ENCODE measurements at regions of chr2 and their contacts with region 1.

Region 1: GRCh38 chr2:84302513-84303412 is 156.3 kb downstream of the SUCLG1 start:
- DNase-seq: peak; percentile 66 to 69
- H3K4me3 ChIP-seq: no peak overlapping the region
- H3K4me3 Mint-ChIP-seq: no peak overlapping the region
- H3K27ac Mint-ChIP-seq: no peak overlapping the region
- H3K4me1 ChIP-seq: peaks cover 32% of the 10 kb centered on the region
- H3K4me1 Mint-ChIP-seq: peaks cover 42% of the 10 kb centered on the region
- H3K27me3 ChIP-seq: no peaks in the 10 kb centered on the region
- H3K27me3 Mint-ChIP-seq: no peaks in the 10 kb centered on the region
- CTCF ChIP-seq: peak; percentile 57 to 66

Region 2: DNA sequence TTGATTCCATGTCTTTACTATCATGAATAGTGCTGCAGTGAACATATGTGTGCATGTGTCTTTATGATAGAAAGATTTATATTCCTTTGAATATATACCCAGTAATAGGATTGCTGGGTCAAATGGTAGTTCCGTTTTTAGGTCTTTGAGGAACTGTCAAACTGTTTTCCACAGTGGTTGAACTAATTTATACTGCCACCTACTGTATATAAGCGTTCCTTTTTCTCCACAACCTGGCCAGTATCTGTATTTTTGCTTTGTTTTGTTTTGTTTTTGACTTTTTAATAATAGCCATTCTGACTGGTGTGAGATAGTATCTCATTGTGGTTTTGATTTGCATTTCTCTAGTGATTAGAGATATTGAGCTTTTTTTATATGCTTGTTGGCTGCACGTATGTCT is 485.3 kb before region 1 on chr2:
- CTCF ChIA-PET with region 1: no interaction called
- POLR2A ChIA-PET with region 1: no interaction called
- intact Hi-C with region 1: loop called (anchors 1 kb)
- DNase-seq: no peak
- H3K4me3 ChIP-seq: no peak overlapping the region
- H3K4me3 Mint-ChIP-seq: no peak overlapping the region
- H3K27ac Mint-ChIP-seq: no peak overlapping the region
- H3K4me1 ChIP-seq: peaks cover 7% of the 10 kb centered on the region
- H3K4me1 Mint-ChIP-seq: peaks cover 9% of the 10 kb centered on the region
- H3K27me3 ChIP-seq: no peaks in the 10 kb centered on the region
- H3K27me3 Mint-ChIP-seq: no peaks in the 10 kb centered on the region
- CTCF ChIP-seq: peak in 1 of 2 experiments; percentile 9

Region 3: DNA sequence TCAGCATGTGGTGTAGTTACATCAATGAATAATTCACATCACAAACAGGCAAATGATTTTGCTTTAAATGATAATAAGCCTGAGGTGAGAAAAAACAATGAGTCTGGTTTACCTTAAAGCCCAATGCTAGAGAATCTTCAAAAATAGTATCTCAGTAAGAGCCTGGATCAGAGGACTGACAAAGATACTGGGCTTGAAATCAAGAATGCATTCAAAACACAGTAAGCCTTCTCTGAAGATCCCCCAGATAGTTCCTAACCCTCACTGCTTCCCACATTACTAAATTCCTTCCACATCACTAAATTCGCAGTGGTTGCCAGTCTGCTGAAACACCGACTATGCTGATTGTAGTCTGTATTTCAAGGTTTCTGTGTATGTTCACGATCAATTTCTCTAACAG is 358.6 kb before region 1 on chr2:
- CTCF ChIA-PET with region 1: no interaction called
- POLR2A ChIA-PET with region 1: no interaction called
- intact Hi-C with region 1: no loop called
- DNase-seq: no peak
- H3K4me3 ChIP-seq: no peak overlapping the region
- H3K4me3 Mint-ChIP-seq: no peak overlapping the region
- H3K27ac Mint-ChIP-seq: no peak overlapping the region
- H3K4me1 ChIP-seq: no peaks in the 10 kb centered on the region
- H3K4me1 Mint-ChIP-seq: no peaks in the 10 kb centered on the region
- H3K27me3 ChIP-seq: no peaks in the 10 kb centered on the region
- H3K27me3 Mint-ChIP-seq: no peaks in the 10 kb centered on the region
- CTCF ChIP-seq: no peak

Region 4: DNA sequence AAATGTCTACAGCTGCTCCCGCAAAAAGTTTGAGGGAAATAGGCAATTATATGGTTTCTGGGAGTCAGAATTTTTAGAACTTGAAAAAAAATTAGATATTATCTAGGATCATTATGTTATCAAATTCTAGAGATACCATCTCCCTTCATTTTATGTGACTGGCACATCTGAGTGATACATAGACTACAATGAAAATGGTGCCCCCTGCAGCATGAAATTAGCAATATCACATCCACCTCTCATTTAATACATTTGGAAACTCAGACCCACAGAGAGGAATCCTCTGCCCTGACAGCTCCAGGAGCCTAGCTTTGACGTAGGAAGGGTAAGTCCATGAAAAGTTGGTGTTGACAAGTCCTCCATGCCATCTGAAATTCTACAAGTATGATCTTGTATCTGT is 225.3 kb before region 1 on chr2:
- CTCF ChIA-PET with region 1: no interaction called
- POLR2A ChIA-PET with region 1: no interaction called
- intact Hi-C with region 1: loop called (anchors 2 kb)
- DNase-seq: peak in 1 of 2 experiments; percentile 35
- H3K4me3 ChIP-seq: no peak overlapping the region
- H3K4me3 Mint-ChIP-seq: no peak overlapping the region
- H3K27ac Mint-ChIP-seq: no peak overlapping the region
- H3K4me1 ChIP-seq: no peaks in the 10 kb centered on the region
- H3K4me1 Mint-ChIP-seq: no peaks in the 10 kb centered on the region
- H3K27me3 ChIP-seq: no peaks in the 10 kb centered on the region
- H3K27me3 Mint-ChIP-seq: no peaks in the 10 kb centered on the region
- CTCF ChIP-seq: peak; percentile 17 to 39

Region 5: GRCh38 chr2:84152462-84152861 is 150.3 kb before region 1 on chr2:
- CTCF ChIA-PET with region 1: no interaction called
- POLR2A ChIA-PET with region 1: no interaction called
- intact Hi-C with region 1: no loop called
- DNase-seq: no peak
- H3K4me3 ChIP-seq: no peak overlapping the region
- H3K4me3 Mint-ChIP-seq: no peak overlapping the region
- H3K27ac Mint-ChIP-seq: no peak overlapping the region
- H3K4me1 ChIP-seq: no peaks in the 10 kb centered on the region
- H3K4me1 Mint-ChIP-seq: no peaks in the 10 kb centered on the region
- H3K27me3 ChIP-seq: no peaks in the 10 kb centered on the region
- H3K27me3 Mint-ChIP-seq: peaks cover 2% of the 10 kb centered on the region
- CTCF ChIP-seq: no peak

Region 6: DNA sequence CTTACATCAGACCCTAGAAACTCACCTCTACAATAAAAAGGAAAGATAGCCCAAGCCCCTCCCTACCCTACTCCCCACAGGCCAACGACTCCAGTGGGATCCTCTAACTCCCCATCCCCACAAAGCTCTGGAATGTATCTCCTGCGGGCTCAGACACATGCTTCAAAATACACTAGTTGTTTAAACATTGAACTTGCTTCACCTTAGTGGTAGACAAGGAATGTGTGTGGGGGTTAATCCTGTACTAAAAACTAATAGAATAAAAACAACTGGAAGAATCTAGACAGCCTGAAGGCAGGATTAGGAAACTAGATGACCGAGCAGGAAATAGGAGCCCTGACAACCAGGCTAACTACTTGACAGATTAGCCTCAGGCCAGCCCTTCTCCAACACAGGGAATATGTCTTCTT is 55.2 kb before region 1 on chr2:
- CTCF ChIA-PET with region 1: no interaction called
- POLR2A ChIA-PET with region 1: no interaction called
- intact Hi-C with region 1: loop called (anchors 1 kb)
- DNase-seq: peak; percentile 40 to 51
- H3K4me3 ChIP-seq: no peak overlapping the region
- H3K4me3 Mint-ChIP-seq: no peak overlapping the region
- H3K27ac Mint-ChIP-seq: no peak overlapping the region
- H3K4me1 ChIP-seq: no peaks in the 10 kb centered on the region
- H3K4me1 Mint-ChIP-seq: peaks cover 7% of the 10 kb centered on the region
- H3K27me3 ChIP-seq: no peaks in the 10 kb centered on the region
- H3K27me3 Mint-ChIP-seq: no peaks in the 10 kb centered on the region
- CTCF ChIP-seq: no peak

Region 7: DNA sequence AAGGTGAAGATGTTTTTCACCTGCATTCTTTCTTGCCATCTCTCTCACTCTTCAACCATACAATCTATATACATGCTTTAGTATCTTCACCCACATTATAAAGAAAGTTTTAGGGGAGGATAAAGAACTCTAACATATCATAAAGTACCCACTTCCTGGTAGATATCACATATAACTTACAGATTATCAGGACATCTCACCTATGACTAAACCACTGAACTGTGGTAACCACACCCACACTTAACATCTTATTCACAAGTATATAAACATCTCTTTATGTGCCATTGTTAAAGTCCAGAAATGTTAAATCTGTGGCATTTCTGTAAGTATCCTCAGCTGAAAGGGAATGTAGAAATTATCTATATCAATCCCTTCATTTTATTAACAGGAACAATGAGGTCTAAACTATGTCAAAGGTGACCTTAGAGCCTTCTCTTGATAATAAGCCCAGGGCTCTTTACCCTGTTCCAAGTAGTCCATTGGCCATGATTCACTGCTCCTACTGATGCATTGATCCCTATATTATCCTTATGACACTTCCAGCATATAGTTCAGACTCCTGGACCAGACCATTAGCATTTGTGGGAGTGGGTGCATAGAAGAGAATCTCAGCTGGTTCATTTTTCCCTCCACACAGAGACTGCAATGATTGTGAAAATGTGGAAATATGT is 26.0 kb before region 1 on chr2:
- CTCF ChIA-PET with region 1: no interaction called
- POLR2A ChIA-PET with region 1: no interaction called
- intact Hi-C with region 1: no loop called
- DNase-seq: no peak
- H3K4me3 ChIP-seq: no peak overlapping the region
- H3K4me3 Mint-ChIP-seq: no peak overlapping the region
- H3K27ac Mint-ChIP-seq: no peak overlapping the region
- H3K4me1 ChIP-seq: no peaks in the 10 kb centered on the region
- H3K4me1 Mint-ChIP-seq: no peaks in the 10 kb centered on the region
- H3K27me3 ChIP-seq: no peaks in the 10 kb centered on the region
- H3K27me3 Mint-ChIP-seq: peaks cover 6% of the 10 kb centered on the region
- CTCF ChIP-seq: no peak

Region 8: GRCh38 chr2:84782717-84783442 is 480.1 kb after region 1 on chr2:
- CTCF ChIA-PET with region 1: no interaction called
- POLR2A ChIA-PET with region 1: no interaction called
- intact Hi-C with region 1: no loop called
- DNase-seq: no peak
- H3K4me3 ChIP-seq: no peak overlapping the region
- H3K4me3 Mint-ChIP-seq: no peak overlapping the region
- H3K27ac Mint-ChIP-seq: no peak overlapping the region
- H3K4me1 ChIP-seq: no peaks in the 10 kb centered on the region
- H3K4me1 Mint-ChIP-seq: no peaks in the 10 kb centered on the region
- H3K27me3 ChIP-seq: no peaks in the 10 kb centered on the region; the same call in none of the 2 replicates
- H3K27me3 Mint-ChIP-seq: peaks cover 3% of the 10 kb centered on the region
- CTCF ChIP-seq: no peak